Calu3 (cell line): ENCODE measurements at regions of chr11 and their contacts with region 1.

Region 1: GRCh38 chr11:61384271-61385242 is 7.8 kb upstream of the TMEM216 start:
- DNase-seq: no peak
- H3K4me3 Mint-ChIP-seq: no peak overlapping the region
- H3K27ac Mint-ChIP-seq: no peak overlapping the region
- H3K4me1 Mint-ChIP-seq: no peaks in the 10 kb centered on the region
- H3K27me3 Mint-ChIP-seq: no peaks in the 10 kb centered on the region
- CTCF ChIP-seq: no peak

Region 2: GRCh38 chr11:61254403-61255025 is 130.0 kb before region 1 on chr11:
- CTCF ChIA-PET with region 1: interaction called, 5 read pairs
- intact Hi-C with region 1: loop called (anchors 10 kb)
- DNase-seq: peak; percentile 74
- H3K4me3 Mint-ChIP-seq: no peak overlapping the region
- H3K27ac Mint-ChIP-seq: no peak overlapping the region
- H3K4me1 Mint-ChIP-seq: no peaks in the 10 kb centered on the region
- H3K27me3 Mint-ChIP-seq: peaks cover 59% of the 10 kb centered on the region
- CTCF ChIP-seq: peak; percentile 69

Region 3: DNA sequence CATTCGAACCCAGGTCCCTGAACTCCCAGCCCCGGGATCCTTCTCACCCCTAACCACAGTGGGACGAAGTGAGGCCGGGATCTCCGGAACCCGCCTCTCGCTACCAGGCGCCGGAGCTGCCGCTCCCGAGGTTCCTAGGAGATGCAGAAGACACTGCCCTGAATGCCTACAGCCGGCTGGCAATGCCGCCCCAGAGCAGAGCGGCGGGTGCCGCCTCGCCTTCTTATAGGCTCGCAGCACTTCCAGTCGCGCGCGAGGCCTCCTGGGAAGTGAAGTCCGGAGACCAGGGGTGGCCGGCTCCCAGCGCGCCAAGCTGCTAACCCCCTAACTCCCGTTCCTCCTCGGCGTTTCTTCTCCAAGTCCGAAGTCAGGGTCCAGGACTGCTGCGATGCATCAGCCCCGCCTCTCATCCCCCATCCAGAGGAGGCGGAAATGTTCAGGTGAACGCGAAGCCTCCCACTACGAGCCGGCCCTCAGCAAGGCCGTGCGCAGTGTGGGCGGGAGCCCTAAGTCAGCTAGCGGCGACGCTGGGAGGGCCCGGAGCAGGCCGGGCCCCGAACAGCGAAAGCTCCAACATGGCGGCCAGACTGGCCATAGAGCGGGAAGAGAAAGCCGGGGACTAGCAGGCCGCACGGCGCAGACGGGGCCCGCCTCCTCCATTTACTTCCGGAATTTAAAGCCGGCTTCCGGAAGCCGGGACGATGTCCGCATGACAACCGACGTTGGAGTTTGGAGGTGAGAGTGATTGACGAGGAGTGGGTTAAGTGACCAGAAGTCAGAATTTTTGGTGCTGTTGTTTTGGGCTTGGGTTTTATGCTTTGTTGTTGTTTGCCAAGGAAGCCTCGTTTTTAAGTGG is 22.6 kb before region 1 on chr11 and contains the starts of genes CYB561A3 and TMEM138:
- CTCF ChIA-PET with region 1: interaction called, 14 read pairs
- intact Hi-C with region 1: no loop called
- DNase-seq: peak; percentile 92
- H3K4me3 Mint-ChIP-seq: peak within 1 kb of the TSS; percentile 91
- H3K27ac Mint-ChIP-seq: peak within 1 kb of the TSS; percentile 83
- H3K4me1 Mint-ChIP-seq: no peaks in the 10 kb centered on the region
- H3K27me3 Mint-ChIP-seq: no peaks in the 10 kb centered on the region
- CTCF ChIP-seq: no peak
- total RNA-seq, gene CYB561A3: 33.3 and 39.2 TPM in 2 replicates
- total RNA-seq, gene TMEM138: 45.7 and 51.6 TPM in 2 replicates